Sigmoid colon (tissue), 7 donors: ENCODE measurements at regions of chr1 and their contacts with region 1.

Region 1: GRCh38 chr1:221487781-221488524 is 253.9 kb downstream of the DUSP10 start:
- DNase-seq: no peak
- H3K4me3 ChIP-seq: no peak overlapping the region
- H3K27ac ChIP-seq: no peak overlapping the region
- H3K4me1 ChIP-seq: no peaks in the 10 kb centered on the region
- H3K27me3 ChIP-seq: no peaks in the 10 kb centered on the region
- CTCF ChIP-seq: no peak
- EP300 ChIP-seq: no peak
- POLR2A ChIP-seq: no peak

Region 2: GRCh38 chr1:221522529-221522940 is 34.6 kb after region 1 on chr1:
- intact Hi-C with region 1: loop called (anchors 1 kb)
- DNase-seq: no peak
- H3K4me3 ChIP-seq: no peak overlapping the region
- H3K27ac ChIP-seq: no peak overlapping the region
- H3K4me1 ChIP-seq: no peaks in the 10 kb centered on the region
- H3K27me3 ChIP-seq: no peaks in the 10 kb centered on the region
- CTCF ChIP-seq: no peak
- EP300 ChIP-seq: no peak
- POLR2A ChIP-seq: no peak

Region 3: GRCh38 chr1:221583465-221583864 is 95.5 kb after region 1 on chr1:
- intact Hi-C with region 1: no loop called
- DNase-seq: no peak
- H3K4me3 ChIP-seq: no peak overlapping the region
- H3K27ac ChIP-seq: no peak overlapping the region
- H3K4me1 ChIP-seq: peaks cover 0 to 5% (median 0%) of the 10 kb centered on the region in 4 donors
- H3K27me3 ChIP-seq: no peaks in the 10 kb centered on the region
- CTCF ChIP-seq: no peak
- EP300 ChIP-seq: no peak
- POLR2A ChIP-seq: no peak